Activated CD4-positive, alpha-beta T cell treated with anti-CD3 and anti-CD28 coated beads for 36 hours (primary cell): ENCODE measurements at regions of chr2 and their contacts with region 1.

Region 1: DNA sequence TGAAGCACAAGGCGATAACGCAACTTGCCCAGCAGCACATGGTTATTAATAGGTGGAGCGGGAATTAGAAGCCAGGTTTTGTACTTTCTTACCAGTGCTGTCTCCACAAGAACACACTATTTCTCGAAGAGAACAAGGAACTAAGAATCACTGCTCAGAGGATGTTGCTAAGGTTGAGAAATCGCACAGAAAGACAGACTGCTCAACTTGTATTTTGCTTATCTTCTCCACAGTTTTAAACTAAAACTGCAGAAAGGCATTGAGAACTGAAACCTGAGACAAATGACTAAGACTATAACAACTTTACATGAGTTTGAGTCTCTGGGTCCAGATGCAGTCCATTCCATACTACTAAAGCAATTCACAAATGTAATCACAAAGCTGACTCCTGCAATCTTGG is 6.2 kb downstream of the PRKD3 start:
- DNase-seq: no peak
- ATAC-seq: peak; percentile 37
- H3K4me3 Mint-ChIP-seq: no peak overlapping the region
- H3K27ac Mint-ChIP-seq: no peak overlapping the region
- H3K4me1 Mint-ChIP-seq: peaks cover 58% of the 10 kb centered on the region
- H3K27me3 Mint-ChIP-seq: no peaks in the 10 kb centered on the region

Region 2: DNA sequence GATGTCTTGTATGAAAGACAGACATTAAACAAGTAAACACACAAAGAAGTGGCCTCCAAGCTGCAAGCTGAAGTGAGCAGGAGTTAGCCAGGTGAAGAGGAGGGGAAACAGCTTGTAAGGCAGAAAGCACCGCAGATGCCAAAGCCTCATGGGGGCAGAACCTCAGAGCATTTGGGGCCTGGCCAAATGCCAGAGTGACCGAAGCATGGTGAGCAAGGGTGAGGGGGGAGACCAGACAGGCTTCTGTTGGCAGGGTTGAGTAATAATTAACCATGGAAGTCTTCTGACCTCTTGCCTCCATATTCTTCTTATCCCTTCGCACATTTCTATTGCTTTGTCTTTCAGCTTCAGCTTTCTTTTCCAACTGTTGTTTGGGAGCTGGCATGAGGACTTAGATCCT is 31.6 kb after region 1 on chr2:
- CTCF ChIA-PET with region 1: no interaction called
- POLR2A ChIA-PET with region 1: no interaction called
- intact Hi-C with region 1: loop called in 1 of 2 experiments (anchors 5 kb)
- DNase-seq: no peak
- ATAC-seq: no peak
- H3K4me3 Mint-ChIP-seq: no peak overlapping the region
- H3K27ac Mint-ChIP-seq: no peak overlapping the region
- H3K4me1 Mint-ChIP-seq: peaks cover 3% of the 10 kb centered on the region
- H3K27me3 Mint-ChIP-seq: peaks cover 41% of the 10 kb centered on the region